ENCODE measurements at regions of chr2 and their contacts with region 1.

Region 1: GRCh38 chr2:85595301-85596025 is at the start of gene RNF181:
- DNase-seq: peak; percentile 94

Region 2: DNA sequence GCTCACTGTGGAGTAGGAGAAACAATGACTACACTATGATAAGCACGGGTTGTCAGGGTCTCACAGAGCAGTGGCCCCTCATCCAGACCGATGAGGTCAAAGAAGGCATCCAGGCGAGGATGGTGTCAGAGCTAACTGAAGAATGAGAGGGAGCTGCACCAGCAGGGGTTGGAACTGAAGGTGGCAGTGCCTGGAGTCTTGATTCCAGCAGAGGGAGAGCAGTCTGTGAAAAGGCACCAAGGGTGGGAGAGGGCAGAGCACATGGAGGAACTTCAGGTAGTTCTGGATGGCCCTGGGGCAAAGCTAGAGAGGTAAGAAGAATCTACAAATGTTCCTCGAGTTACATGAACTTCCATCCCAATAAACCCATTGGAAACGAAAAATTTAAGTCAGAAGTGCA is 228.3 kb before region 1 on chr2:
- CTCF ChIA-PET with region 1: no interaction called
- POLR2A ChIA-PET with region 1: no interaction called
- DNase-seq: no peak

Region 3: GRCh38 chr2:85561317-85561979 is 34.0 kb before region 1 on chr2 and contains the start of gene GGCX:
- CTCF ChIA-PET with region 1: no interaction called
- POLR2A ChIA-PET with region 1: interaction called, 14 read pairs
- DNase-seq: peak; percentile 93

Region 4: GRCh38 chr2:85577386-85578242 is 17.8 kb before region 1 on chr2 and contains the start of gene VAMP8:
- CTCF ChIA-PET with region 1: interaction called, 3 read pairs
- POLR2A ChIA-PET with region 1: interaction called, 14 read pairs
- DNase-seq: no peak

Region 5: GRCh38 chr2:85584857-85585783 is 10.3 kb before region 1 on chr2:
- CTCF ChIA-PET with region 1: no interaction called
- POLR2A ChIA-PET with region 1: interaction called, 28 read pairs
- DNase-seq: no peak

Region 6: DNA sequence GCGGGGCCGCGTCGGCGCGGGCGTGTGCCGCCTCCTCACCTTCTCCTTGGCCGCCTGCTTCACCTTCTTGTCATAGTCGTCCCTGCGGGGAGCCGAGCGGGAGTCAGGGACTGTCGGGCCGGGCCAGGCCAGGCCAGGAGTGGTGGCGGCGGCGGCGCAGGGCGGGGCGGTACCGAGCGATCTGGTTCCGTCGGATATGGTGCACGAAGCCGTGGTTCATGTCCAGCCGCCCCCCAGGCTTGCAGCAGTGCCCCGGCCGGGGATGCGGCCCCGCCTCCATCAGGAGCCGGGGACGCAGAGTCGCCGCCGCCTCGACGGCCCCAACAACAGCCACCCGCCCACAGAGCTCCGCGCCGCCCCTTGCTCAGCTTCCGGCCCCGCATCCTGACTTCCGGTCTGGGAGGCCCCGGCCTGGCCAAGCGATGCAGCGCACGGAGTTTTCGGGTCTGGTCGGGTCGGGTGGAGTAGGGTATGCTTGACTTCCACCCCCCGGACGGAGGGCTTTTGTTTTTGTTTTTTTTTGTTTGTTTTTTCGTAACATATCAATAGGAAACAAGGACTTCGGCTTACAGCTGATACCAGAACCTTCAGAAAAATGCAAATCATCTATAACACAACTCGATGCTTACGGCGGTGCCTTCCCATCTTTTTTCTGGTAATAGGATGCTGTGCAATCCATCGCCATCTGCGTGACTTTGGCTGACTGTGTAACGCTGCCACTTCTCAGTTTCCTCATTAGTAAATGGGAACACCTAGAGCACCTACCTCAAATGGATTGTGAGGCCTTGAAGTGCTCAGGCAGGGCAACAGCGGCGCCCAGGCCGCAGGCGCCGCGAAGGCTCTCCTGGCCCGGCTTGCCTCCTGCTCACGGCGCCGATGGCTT is 16.5 kb after region 1 on chr2 and contains the start of gene C2orf68:
- CTCF ChIA-PET with region 1: interaction called, 3 read pairs
- POLR2A ChIA-PET with region 1: interaction called, 30 read pairs
- DNase-seq: peak; percentile 91